ENCODE measurements at regions of chr1 and their contacts with region 1.

Region 1: GRCh38 chr1:222167111-222167510 is 380.8 kb downstream of the HHIPL2 start:
- DNase-seq: peak in 3 of 10 donors; percentile 24 to 81 (median 48)

Region 2: GRCh38 chr1:221543529-221544120 is 623.5 kb before region 1 on chr1:
- intact Hi-C with region 1: loop called (anchors 5 kb)
- DNase-seq: no peak

Region 3: GRCh38 chr1:221994939-221995338 is 172.2 kb before region 1 on chr1:
- intact Hi-C with region 1: loop called (anchors 5 kb)
- DNase-seq: no peak

Region 4: DNA sequence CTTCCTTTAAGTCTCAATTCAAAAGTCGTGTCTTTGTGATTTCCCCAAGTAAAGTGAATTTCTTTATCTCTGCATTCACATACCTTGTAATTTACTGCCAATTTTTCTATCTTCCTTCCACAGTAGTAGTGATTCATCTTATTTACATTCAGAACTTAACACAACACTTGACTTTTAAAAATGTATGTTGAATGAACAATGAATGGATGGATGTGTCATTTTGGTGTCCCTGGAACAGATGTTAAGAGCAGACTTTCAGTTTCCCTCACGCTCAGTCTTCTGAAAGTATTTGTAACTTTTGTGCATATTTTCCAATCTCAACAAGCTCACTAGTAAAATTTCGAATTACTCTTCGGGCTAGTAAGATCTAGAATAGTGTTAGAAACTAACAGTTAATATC is 28.7 kb after region 1 on chr1:
- intact Hi-C with region 1: no loop called
- DNase-seq: no peak

Measured in posterior cingulate gyrus (tissue), 11 donors.